ENCODE measurements at regions of chr10 and their contacts with region 1.

Region 1: GRCh38 chr10:76547352-76547972 is 1090.1 kb downstream of the KCNMA1 start:
- DNase-seq: peak; percentile 58 to 85 (median 66)
- ATAC-seq: peak; percentile 93
- H3K4me3 ChIP-seq: no peak overlapping the region
- H3K27ac ChIP-seq: no peak overlapping the region
- H3K4me1 ChIP-seq: no peaks in the 10 kb centered on the region
- H3K27me3 ChIP-seq: no peaks in the 10 kb centered on the region
- CTCF ChIP-seq: peak; percentile 71 to 85 (median 79)
- EP300 ChIP-seq: no peak
- POLR2A ChIP-seq: no peak
- RAD21 ChIP-seq: peak; percentile 69 to 74

Region 2: DNA sequence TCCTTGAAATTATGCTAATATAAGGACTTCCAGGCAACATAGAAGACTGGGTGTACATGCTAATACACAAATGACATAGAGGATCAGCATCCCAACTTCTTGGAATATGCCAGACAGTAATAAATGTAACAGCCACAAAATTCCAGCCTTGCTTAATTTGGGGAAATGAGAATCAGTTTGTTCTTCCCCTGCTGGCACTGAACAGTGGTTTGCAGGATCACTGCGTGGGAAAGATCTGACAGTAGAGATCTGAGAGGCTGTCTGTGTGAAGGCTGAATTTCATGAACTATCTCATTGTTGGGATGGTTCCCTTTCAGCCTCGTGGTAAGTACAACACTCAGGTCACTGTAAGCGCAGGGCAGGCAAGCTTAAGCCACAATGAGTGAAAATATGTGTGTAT is 38.0 kb before region 1 on chr10:
- CTCF ChIA-PET with region 1: no interaction called
- POLR2A ChIA-PET with region 1: no interaction called
- in situ Hi-C with region 1: no loop called
- intact Hi-C with region 1: no loop called
- DNase-seq: no peak
- ATAC-seq: no peak
- H3K4me3 ChIP-seq: no peak overlapping the region
- H3K27ac ChIP-seq: no peak overlapping the region
- H3K4me1 ChIP-seq: no peaks in the 10 kb centered on the region
- H3K27me3 ChIP-seq: no peaks in the 10 kb centered on the region
- CTCF ChIP-seq: no peak
- EP300 ChIP-seq: no peak
- POLR2A ChIP-seq: no peak
- RAD21 ChIP-seq: no peak

Region 3: GRCh38 chr10:76984559-76985443 is 437.3 kb after region 1 on chr10:
- CTCF ChIA-PET with region 1: interaction called, 3 read pairs
- POLR2A ChIA-PET with region 1: no interaction called
- in situ Hi-C with region 1: no loop called
- intact Hi-C with region 1: loop called (anchors 10 kb)
- DNase-seq: peak; percentile 71 to 82 (median 73)
- ATAC-seq: peak; percentile 97
- H3K4me3 ChIP-seq: no peak overlapping the region
- H3K27ac ChIP-seq: no peak overlapping the region
- H3K4me1 ChIP-seq: no peaks in the 10 kb centered on the region
- H3K27me3 ChIP-seq: peaks cover 0 to 5% of the 10 kb centered on the region in 2 experiments; a peak in 1 of 5 replicates
- CTCF ChIP-seq: peak; percentile 83 to 95 (median 89)
- EP300 ChIP-seq: no peak
- POLR2A ChIP-seq: no peak
- RAD21 ChIP-seq: peak; percentile 68 to 80

Measured in K562 (cell line).